ENCODE measurements at regions of chr6 and their contacts with region 1.

Region 1: GRCh38 chr6:134063966-134064445 is 11.6 kb upstream of the SLC2A12 start:
- DNase-seq: peak; percentile 53
- ATAC-seq: peak; percentile 91

Region 2: DNA sequence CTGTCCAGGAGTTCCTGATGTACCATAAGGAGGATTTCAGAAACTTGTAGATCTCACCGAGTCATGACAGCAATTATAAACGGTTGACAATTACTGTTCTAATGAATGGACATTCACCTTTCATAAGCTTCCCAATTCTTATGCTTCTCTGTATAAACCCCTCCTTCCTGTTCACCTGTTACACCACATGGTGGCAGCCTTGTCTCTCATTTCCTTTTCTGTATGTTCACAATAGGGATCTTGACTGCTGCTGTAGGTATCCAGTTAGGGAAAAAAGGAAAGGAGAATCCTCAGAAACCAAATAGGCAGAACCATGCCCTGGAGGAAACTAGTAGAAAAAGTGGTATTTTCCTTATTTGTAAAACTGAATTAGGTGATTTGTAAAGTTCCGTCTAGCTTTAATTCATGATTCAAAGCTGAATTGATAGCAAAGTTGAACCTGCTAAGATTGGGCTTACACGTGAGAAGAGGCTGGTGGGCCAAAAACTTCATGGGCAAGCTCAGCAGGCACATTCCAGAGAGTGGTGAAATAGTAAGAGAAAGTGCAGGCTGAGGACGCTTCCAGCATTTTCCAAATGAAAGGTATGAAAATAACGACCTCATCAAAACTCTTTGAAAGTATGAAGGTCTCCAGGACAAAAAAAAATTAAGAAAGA is 139.9 kb before region 1 on chr6:
- intact Hi-C with region 1: loop called (anchors 10 kb)
- DNase-seq: no peak
- ATAC-seq: peak; percentile 93

Region 3: GRCh38 chr6:133973109-133973971 is 90.7 kb before region 1 on chr6:
- intact Hi-C with region 1: loop called (anchors 5 kb)
- DNase-seq: no peak
- ATAC-seq: peak; percentile 56

Measured in Right ventricle myocardium superior (tissue), 1 donor.